Left ventricle myocardium superior (tissue), 1 donor: ENCODE measurements at regions of chr6 and their contacts with region 1.

Region 1: DNA sequence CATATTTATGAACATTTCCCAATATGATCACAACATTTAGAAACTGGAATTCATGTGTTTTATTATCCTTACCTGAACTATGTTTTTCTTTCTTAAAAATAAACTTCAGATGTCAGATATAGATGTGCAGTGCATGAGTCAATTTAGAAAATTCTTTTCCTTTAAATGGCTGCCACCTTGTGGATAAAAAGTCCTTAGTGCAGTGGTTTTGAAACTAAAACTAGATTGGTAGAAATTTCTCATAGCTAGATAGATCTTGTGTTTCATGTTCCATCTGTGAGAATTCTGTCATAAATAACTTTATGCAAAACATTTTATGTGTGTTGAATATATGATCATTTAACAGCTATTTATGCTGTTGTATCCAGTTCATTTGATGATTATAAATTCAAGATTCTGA is 134.9 kb downstream of the KLHL32 start:
- DNase-seq: no peak
- ATAC-seq: no peak

Region 2: DNA sequence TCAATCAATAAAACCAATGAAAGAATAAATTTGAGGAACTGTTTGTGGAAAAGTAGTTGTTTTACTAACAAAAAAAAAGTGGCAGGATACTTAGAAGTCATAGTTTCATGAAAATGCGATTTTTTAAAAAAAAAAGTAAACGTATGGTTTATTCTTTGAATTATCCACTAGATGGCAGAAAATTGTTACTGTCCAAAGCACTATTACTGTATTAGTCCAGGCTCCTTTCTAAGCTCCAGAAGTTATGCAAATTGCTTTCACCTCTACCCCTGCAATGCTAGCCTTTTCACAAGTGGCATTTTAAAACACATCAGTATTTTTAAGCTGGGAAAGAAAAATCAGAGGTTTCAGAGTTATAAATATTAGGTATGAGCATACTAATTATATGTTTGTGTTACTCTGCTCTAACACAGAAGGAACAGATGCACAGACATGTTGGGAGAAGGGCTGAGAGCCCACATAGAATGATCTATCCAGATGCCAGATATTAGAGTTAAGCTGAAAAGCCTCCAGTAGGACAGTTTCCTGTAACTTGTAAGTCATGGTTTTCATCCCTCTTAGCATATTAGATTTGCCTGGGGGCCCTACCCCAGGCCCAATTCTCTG is 432.6 kb before region 1 on chr6:
- intact Hi-C with region 1: loop called (anchors 5 kb)
- DNase-seq: no peak
- ATAC-seq: peak; percentile 50

Region 3: DNA sequence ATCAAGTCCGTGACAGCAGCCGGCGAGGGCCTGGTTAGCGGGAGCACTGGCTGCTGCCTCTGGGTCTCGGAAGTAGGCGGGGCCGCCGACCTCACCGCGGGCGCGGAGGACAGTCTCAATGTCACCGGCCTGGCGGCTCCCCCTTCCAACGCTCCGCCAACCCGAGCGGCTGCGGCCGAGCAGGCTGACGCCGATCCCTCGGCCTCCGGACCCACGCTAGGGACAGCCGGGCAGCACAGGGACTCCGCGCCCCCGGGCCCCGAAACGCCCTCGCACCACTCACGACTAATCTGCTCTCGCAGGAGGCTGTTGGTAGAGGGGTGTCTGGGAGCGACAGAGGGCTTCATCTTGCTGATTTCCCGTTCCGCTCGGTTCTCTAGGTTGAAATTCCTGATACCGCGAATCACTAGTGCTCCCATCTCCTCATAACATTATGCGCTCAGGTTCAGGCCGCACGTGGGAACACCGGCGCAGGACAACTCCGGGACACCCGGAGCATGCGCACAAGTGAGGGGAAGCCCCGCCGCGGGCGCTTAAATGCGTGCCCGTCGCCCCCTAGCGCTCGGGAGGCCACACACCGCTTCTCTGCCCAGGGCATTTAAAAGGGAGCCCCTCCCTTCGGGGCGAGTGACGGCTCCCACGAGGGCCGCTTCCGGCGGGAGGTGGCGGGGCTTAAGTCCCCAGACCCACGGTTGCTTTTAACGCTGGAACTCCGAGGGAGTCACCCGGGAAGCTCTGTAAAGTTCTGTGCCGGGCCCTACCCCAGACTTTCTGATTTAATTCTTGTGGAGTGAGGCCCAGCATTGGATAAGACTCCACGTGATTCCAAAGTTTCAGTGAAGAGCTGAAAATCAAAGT is 161.9 kb before region 1 on chr6 and contains the start of gene NDUFAF4:
- intact Hi-C with region 1: loop called (anchors 2 kb)
- DNase-seq: peak; percentile 98
- ATAC-seq: peak; percentile 99
- total RNA-seq, gene NDUFAF4: 98.0 TPM

Region 4: GRCh38 chr6:97129106-97129505 is 69.6 kb after region 1 on chr6:
- intact Hi-C with region 1: no loop called
- DNase-seq: no peak
- ATAC-seq: no peak